Aorta (tissue), 5 donors: ENCODE measurements at regions of chr2 and their contacts with region 1.

Region 1: GRCh38 chr2:636641-637405 is 40.4 kb downstream of the TMEM18 start:
- DNase-seq: peak; percentile 79 to 92
- ATAC-seq: peak; percentile 92
- H3K4me3 ChIP-seq: peak overlapping the region; percentile 1 to 3
- H3K27ac ChIP-seq: no peak overlapping the region
- H3K4me1 ChIP-seq: no peaks in the 10 kb centered on the region
- H3K27me3 ChIP-seq: no peaks in the 10 kb centered on the region

Region 2: GRCh38 chr2:169741-170140 is 467.1 kb before region 1 on chr2:
- intact Hi-C with region 1: loop called (anchors 5 kb)
- DNase-seq: no peak
- ATAC-seq: no peak
- H3K4me3 ChIP-seq: no peak overlapping the region
- H3K27ac ChIP-seq: no peak overlapping the region
- H3K4me1 ChIP-seq: no peaks in the 10 kb centered on the region
- H3K27me3 ChIP-seq: no peaks in the 10 kb centered on the region

Region 3: GRCh38 chr2:246489-247144 is 390.2 kb before region 1 on chr2:
- intact Hi-C with region 1: loop called in 1 of 2 experiments (anchors 5 kb)
- DNase-seq: no peak
- ATAC-seq: no peak
- H3K4me3 ChIP-seq: no peak overlapping the region
- H3K27ac ChIP-seq: no peak overlapping the region
- H3K4me1 ChIP-seq: no peaks in the 10 kb centered on the region
- H3K27me3 ChIP-seq: no peaks in the 10 kb centered on the region

Region 4: DNA sequence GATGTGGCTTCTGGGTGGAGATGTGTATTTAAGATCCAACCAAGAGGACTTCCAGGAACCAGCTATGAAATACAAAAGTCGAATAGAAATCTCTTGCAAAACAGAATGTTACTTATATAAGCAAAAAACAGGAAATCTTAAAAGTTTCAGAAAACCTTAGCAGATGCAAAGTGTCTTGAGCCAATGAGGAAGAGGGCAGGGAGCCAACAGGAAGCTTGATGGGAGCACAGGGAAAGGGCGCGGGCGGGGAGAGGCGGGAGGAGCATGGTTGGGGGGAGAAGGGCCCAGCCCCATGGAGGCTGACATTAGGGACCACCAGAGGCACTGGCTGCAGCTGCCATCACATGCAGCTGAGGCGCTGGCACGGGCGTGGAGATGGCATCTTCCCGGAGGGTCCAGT is 517.1 kb after region 1 on chr2:
- intact Hi-C with region 1: no loop called
- DNase-seq: peak in 1 of 2 donors; percentile 74
- ATAC-seq: no peak
- H3K4me3 ChIP-seq: no peak overlapping the region
- H3K27ac ChIP-seq: no peak overlapping the region
- H3K4me1 ChIP-seq: no peaks in the 10 kb centered on the region
- H3K27me3 ChIP-seq: no peaks in the 10 kb centered on the region